Aorta (tissue), 5 donors: ENCODE measurements at regions of chr4 and their contacts with region 1.

Region 1: DNA sequence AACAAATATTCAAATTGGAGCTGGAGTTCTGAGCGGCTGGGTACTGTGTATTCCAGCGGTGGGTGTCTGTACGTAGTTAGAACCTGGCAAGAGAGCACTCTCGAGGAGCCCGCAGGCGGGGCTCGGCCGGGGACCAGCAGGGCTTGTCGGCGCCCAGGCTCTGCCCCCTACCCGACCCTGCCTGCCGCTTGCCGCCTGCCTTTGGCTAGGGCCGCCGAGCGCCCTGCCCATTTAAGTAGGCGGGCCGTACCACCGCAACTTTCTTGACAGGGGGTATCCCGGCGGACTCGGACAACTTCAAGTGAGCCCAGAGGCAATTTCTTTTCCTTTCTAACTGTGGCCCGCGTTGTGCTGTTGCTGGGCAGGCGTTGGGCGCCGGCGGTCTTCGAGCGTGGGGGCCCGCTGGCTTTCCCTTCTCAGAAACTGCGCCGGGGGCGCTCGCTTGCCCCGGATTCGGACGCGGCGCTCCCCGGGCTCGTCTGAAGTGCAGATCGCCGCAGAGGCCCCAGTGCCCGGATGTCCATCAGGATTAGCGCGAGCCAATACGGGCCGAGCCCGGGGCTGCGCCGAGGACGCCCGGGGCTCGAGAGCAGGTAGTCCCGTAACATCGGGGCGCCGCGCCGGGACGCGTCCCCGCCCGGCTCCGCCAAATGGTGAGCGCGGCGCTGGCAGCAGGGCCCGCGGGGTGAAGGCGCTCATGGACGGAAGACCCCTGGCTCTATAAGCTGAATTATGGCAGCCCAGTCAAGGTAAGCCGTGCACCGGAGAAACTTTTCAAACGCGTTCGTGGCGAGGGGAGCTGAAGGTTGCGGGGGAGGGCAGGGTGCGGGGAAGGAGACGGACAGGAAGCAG is 72.1 kb downstream of the AFF1 start:
- DNase-seq: peak; percentile 95 to 97
- ATAC-seq: peak; percentile 97
- H3K4me3 ChIP-seq: peak overlapping the region; percentile 24 to 94
- H3K27ac ChIP-seq: peak overlapping the region; percentile 74 to 78
- H3K4me1 ChIP-seq: no peaks in the 10 kb centered on the region
- H3K27me3 ChIP-seq: no peaks in the 10 kb centered on the region

Region 2: DNA sequence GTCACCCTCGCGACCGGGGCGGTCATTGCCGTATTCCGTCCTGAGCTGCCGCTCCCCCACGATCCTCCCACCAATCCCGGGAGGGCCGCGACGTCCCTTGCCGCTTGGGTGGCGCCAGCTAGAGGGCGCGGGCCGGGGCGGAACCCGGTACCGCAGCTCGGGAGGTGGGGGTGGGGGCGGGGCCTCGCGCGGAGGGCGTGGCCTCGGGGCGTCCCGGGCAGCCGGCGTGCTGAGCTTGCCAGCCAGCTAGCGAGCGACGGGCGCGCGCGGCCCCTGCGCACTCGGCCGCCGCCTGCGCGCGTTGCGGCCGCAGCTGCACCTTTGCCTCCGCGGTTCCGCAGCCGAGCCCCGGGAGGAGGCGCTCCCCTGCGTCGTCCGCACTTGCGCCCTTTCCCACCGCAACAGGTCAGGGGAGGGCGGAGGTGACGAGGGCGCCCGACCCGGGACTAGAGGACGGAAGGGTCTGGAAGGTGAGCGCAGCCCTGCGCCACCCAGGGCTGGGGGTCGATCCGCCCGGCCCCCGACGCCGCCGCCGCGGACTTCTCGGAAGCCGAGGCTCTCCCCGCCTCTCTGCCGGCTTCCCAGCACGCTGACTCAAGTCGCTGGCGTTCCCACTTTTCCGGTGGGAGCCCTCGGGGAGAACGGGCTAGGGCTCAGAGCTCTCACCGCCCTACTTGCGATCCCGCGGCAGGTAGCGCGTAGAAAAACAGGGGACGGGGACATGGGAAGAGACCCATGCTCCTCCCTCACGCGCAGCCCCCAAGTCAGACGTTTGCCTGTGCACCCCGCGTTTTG is 71.9 kb before region 1 on chr4 and contains the start of gene AFF1:
- intact Hi-C with region 1: loop called (anchors 5 kb)
- DNase-seq: peak; percentile 96 to 98
- ATAC-seq: peak; percentile 96
- H3K4me3 ChIP-seq: peak within 1 kb of the TSS; percentile 59 to 99
- H3K27ac ChIP-seq: peak within 1 kb of the TSS; percentile 46 to 94
- H3K4me1 ChIP-seq: peaks cover 2 to 3% of the 10 kb centered on the region in 2 donors
- H3K27me3 ChIP-seq: no peaks in the 10 kb centered on the region
- total RNA-seq, gene AFF1: 99.6 to 107 TPM

Region 3: DNA sequence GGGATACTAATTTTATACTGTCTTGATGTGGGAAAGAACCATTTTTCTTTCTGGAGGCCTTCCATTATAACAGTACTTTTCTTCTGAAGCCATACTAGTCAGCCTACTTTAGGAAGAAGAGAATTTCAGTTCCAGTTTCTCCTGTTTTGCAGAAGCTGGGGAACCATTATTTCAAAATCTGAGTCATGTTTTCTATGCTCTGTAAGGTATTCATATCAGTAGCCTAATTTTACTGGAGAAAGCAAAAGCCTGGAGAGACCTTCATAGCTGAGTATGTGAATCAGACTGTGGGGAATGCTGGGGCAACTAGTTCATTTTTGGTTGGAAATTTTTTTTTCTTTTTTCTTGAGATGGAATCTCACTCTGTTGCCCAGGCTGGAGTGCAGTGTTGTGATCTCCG is 49.7 kb before region 1 on chr4:
- intact Hi-C with region 1: loop called in 1 of 2 experiments (anchors 5 kb)
- DNase-seq: no peak
- ATAC-seq: no peak
- H3K4me3 ChIP-seq: no peak overlapping the region
- H3K27ac ChIP-seq: peak overlapping the region in 1 of 2 donors; percentile 51
- H3K4me1 ChIP-seq: peaks cover 4 to 9% of the 10 kb centered on the region in 2 donors
- H3K27me3 ChIP-seq: no peaks in the 10 kb centered on the region

Region 4: DNA sequence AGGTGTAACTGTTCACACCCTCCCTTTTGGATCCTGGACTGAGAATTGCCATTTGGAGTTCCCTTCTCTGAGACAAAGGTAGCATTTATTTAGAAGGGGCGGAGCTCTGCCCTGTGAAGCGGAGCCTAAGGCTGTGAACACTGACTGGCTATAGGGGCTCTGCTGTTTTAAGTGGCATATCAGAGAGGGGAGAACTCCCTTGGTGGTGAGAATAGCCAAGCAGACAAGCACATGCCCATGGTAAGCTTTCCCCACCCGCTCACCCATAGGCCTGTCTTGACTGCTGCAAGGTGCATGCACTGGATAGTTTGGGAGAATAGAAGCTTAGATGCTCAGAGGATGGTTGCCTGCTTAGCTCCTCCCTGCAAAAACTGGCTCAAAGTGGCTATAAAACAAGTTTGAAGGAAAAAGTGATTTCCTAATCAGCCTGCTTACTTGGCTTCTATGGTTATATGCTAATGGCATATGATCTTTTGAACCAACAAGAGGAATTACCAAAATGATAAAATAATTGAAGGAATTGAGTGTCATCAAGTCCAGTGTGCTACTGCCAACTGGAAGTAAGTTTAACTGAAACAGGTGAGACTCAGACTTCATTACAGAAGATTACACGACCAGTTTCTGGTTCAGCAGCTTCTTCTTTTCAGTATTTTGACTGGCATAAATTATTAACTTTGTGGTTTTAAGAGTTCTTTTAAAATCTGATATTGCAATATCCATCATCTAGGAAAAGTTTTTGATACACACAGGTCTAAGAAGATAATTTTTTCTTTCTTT is 36.3 kb after region 1 on chr4:
- intact Hi-C with region 1: loop called in 1 of 2 experiments (anchors 5 kb)
- DNase-seq: no peak
- ATAC-seq: no peak
- H3K4me3 ChIP-seq: no peak overlapping the region
- H3K27ac ChIP-seq: no peak overlapping the region
- H3K4me1 ChIP-seq: peaks cover 4 to 18% of the 10 kb centered on the region in 2 donors
- H3K27me3 ChIP-seq: no peaks in the 10 kb centered on the region

Region 5: DNA sequence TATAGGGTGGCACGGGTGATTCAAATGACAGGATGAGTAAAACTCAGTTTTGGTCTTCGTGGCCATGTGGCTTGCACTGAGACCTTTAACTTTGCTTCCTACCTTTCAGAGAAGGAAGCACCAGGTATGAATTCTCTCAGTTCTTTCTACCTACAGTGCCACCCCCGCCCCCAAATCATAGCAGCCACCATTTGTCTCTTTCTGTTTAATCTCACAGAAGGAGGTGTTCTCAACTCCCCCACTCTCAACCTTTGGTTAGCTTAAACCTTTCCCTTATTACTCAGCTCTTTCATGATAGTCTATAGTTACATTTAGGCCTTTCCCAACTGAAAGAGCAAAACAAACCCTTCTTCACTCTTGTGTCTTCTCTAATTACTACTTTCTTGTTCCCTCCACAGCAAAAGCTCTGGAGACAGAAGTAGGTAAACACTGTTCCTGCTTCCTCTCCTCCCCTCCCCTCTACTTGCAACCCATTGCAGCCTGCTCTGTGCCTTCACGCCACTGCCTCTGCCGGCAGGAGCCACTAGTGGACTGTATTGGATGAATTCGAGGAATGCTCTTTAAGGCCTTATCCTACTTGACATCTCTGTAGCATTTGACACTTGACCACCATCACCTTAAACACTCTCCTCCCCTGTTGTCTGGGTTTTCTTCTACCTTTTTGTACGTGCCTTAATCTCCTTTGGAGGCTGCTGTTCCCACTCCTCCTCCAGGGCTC is 51.6 kb after region 1 on chr4:
- intact Hi-C with region 1: loop called in 1 of 2 experiments (anchors 5 kb)
- DNase-seq: no peak
- ATAC-seq: no peak
- H3K4me3 ChIP-seq: no peak overlapping the region
- H3K27ac ChIP-seq: peak overlapping the region; percentile 4 to 28
- H3K4me1 ChIP-seq: peaks cover 8 to 19% of the 10 kb centered on the region in 2 donors
- H3K27me3 ChIP-seq: no peaks in the 10 kb centered on the region

Region 6: GRCh38 chr4:87078987-87079486 is 72.1 kb after region 1 on chr4:
- intact Hi-C with region 1: loop called in 1 of 2 experiments (anchors 5 kb)
- DNase-seq: no peak
- ATAC-seq: peak; percentile 80
- H3K4me3 ChIP-seq: no peak overlapping the region
- H3K27ac ChIP-seq: peak overlapping the region; percentile 39 to 51
- H3K4me1 ChIP-seq: peaks cover 10% of the 10 kb centered on the region in 2 donors
- H3K27me3 ChIP-seq: no peaks in the 10 kb centered on the region

Region 7: DNA sequence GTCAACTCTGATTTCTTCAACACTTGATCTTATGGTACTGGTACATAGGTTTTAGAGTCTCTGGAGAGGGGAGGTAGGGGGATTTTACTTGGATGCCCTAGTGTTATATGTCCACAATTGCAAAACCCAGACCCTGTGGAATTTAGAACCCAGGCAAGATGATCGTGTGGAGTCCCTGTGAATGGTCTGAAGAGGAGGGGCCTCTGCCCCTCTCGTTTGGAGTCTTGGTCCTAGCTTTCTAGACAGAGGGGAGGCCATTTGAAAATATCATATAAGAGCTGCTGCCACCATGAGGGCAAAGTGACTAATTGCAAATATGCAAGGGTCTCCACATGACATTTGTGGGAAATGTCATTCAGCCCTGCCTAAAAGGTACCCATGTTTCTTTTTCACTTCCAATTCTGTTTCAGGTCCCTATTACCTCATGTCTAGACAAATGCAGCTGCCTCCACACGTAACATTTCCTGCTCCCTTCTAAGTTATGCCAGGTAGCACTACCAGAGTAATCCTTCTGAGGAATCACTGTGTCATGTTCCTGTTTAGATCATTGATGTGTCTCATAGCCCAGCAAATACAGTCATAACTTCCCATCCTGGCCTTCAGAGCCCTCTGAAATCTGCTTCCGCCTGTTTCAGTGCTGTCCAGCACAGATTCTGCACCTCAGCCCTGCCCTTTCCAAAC is 86.7 kb after region 1 on chr4:
- intact Hi-C with region 1: loop called in 1 of 2 experiments (anchors 2 kb)
- DNase-seq: no peak
- ATAC-seq: peak; percentile 77
- H3K4me3 ChIP-seq: no peak overlapping the region
- H3K27ac ChIP-seq: no peak overlapping the region
- H3K4me1 ChIP-seq: peaks cover 0 to 2% of the 10 kb centered on the region in 2 donors
- H3K27me3 ChIP-seq: no peaks in the 10 kb centered on the region